ENCODE measurements at regions of chr9 and their contacts with region 1.

Region 1: GRCh38 chr9:76445976-76446375 is 13.0 kb upstream of the GCNT1 start:
- DNase-seq: no peak
- H3K4me3 ChIP-seq: no peak overlapping the region
- H3K27ac ChIP-seq: no peak overlapping the region
- H3K4me1 ChIP-seq: peaks cover 0 to 9% (median 4%) of the 10 kb centered on the region in 6 donors
- H3K27me3 ChIP-seq: no peaks in the 10 kb centered on the region
- CTCF ChIP-seq: no peak
- POLR2A ChIP-seq: no peak

Region 2: DNA sequence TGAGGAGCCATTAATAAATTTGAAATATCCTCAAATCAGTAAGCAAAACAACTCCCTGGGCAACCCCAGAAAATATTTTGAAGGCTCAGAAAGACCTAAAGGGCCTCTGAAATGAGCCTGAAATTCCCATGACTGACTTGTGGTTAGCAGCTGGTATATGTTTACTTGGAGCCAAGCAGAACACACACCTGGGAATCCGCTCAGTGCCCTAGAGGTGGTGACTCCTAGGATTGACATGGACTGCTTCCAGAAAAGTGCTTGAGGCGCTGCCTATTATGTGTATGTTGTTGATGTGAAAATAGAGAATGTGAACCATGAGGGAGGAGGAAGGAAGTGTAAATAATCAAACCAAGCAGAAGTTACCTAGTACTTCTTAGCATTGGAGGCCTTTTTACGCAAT is 66.5 kb before region 1 on chr9:
- intact Hi-C with region 1: no loop called
- DNase-seq: no peak
- H3K4me3 ChIP-seq: no peak overlapping the region
- H3K27ac ChIP-seq: no peak overlapping the region
- H3K4me1 ChIP-seq: peaks cover 0 to 9% (median 0%) of the 10 kb centered on the region in 6 donors
- H3K27me3 ChIP-seq: no peaks in the 10 kb centered on the region
- CTCF ChIP-seq: no peak
- POLR2A ChIP-seq: no peak

Region 3: GRCh38 chr9:76658535-76659231 is 212.7 kb after region 1 on chr9:
- intact Hi-C with region 1: loop called (anchors 5 kb)
- DNase-seq: no peak
- H3K4me3 ChIP-seq: no peak overlapping the region
- H3K27ac ChIP-seq: peak overlapping the region in 2 of 8 donors; percentile 16 to 46
- H3K4me1 ChIP-seq: peaks cover 11 to 72% (median 53%) of the 10 kb centered on the region in 6 donors
- H3K27me3 ChIP-seq: no peaks in the 10 kb centered on the region
- CTCF ChIP-seq: peak; percentile 34 to 67 (median 54)
- POLR2A ChIP-seq: no peak

Region 4: DNA sequence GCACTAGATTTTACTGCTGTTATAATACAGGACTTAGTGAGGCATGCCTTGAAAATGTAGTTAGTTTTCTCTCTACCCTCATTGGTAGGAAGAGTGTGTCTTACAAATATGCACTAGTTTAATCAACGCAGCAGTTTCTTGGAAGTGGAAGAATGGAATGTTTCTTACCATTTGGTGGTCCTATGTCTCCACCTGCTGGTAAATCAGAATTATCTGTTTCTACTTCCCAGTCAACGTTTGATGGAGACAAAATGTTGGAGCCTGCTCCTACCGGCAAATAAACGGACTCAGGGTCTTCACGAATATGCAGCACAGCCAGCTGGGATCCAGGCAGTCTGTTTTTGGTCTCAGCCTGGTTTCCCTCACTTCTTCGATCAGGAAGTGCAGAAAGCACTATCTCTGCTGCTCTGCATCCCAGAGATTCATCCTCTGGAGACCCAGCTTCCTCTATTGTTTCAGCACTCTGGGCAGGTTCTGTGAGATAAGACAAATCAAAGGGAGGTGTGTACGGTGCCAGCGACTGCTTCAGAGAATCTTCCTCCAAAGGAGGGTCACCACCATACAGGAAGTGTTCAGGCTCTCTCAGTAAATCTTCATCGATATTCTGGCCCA is 258.7 kb after region 1 on chr9:
- intact Hi-C with region 1: loop called (anchors 5 kb)
- DNase-seq: no peak
- H3K4me3 ChIP-seq: no peak overlapping the region
- H3K27ac ChIP-seq: no peak overlapping the region
- H3K4me1 ChIP-seq: peaks cover 0 to 14% (median 7%) of the 10 kb centered on the region in 6 donors
- H3K27me3 ChIP-seq: peaks cover 0 to 18% (median 0%) of the 10 kb centered on the region in 7 donors
- CTCF ChIP-seq: peak; percentile 52 to 86 (median 71)
- POLR2A ChIP-seq: no peak

Region 5: GRCh38 chr9:76787677-76788076 is 341.7 kb after region 1 on chr9:
- intact Hi-C with region 1: no loop called
- DNase-seq: no peak
- H3K4me3 ChIP-seq: no peak overlapping the region
- H3K27ac ChIP-seq: no peak overlapping the region
- H3K4me1 ChIP-seq: no peaks in the 10 kb centered on the region
- H3K27me3 ChIP-seq: peaks cover 0 to 4% (median 0%) of the 10 kb centered on the region in 7 donors
- CTCF ChIP-seq: no peak
- POLR2A ChIP-seq: no peak

Measured in spleen (tissue), 13 donors.